AG04450 (cell line): ENCODE measurements at regions of chr14 and their contacts with region 1.

Region 1: DNA sequence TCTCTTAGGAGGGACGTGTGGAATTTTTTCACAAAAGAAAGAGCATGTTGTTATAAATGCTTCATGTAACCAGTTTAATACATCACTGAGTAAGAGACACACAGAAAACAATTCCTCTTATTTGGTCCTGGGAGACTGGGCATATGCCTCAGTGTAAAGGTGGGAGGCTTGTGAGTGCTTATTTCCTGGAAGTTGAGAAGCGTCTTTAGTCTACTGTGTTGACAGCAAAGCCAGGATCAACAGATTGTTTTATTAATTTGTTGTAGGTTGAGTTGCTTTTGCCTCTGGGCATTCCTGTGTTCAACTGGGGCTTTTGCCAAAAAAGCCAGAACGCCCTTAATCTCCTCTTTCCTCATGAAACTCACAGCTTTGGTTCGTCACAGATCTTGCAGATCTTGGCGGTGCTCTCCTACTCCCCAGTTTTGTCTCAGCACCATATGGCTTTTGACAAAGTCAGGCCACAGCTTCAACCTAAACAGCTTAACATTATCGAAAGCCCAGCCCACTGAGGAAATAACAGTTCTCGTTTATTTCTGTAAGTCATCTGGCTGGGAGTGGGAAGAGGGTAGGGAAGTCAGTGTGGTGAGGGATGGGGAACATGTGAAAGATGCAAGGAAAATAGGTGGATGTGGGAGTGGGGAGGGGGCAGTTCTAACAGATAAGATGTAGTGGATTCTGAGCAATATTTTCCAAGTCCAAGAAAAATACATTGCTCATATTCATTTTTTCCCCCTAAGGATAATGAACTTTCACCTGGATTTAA is 227.2 kb downstream of the DACT1 start:
- DNase-seq: peak; percentile 60
- H3K4me3 ChIP-seq: no peak overlapping the region
- H3K27ac ChIP-seq: peak overlapping the region; percentile 74
- H3K27me3 ChIP-seq: no peaks in the 10 kb centered on the region
- CTCF ChIP-seq: no peak

Region 2: GRCh38 chr14:58850011-58850410 is 14.9 kb before region 1 on chr14:
- CTCF ChIA-PET with region 1: no interaction called
- POLR2A ChIA-PET with region 1: no interaction called
- DNase-seq: no peak
- H3K4me3 ChIP-seq: no peak overlapping the region
- H3K27ac ChIP-seq: no peak overlapping the region
- H3K27me3 ChIP-seq: no peaks in the 10 kb centered on the region
- CTCF ChIP-seq: no peak

Region 3: DNA sequence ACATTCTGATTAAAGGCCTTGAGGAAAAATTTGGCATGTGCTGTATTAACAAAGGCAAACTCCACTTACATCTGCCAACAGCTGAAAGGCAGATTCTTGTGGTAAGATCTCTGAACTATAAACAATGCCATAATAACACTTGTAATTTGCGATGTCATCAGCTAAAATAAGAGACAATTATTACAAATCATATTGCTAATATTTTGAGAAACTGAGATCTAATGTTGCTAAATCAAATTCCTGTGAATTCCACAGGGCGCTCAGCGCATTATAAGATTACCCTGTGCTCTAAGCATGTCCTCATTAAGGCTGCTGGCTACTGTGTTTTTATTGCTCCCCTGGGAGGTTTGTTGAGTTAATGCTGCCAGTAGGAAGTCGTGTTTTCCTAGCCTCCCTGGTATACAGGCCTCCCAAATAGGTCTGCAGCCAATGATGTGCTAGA is 17.7 kb after region 1 on chr14:
- CTCF ChIA-PET with region 1: no interaction called
- POLR2A ChIA-PET with region 1: interaction called, 15 read pairs
- DNase-seq: no peak
- H3K4me3 ChIP-seq: no peak overlapping the region
- H3K27ac ChIP-seq: no peak overlapping the region
- H3K27me3 ChIP-seq: no peaks in the 10 kb centered on the region
- CTCF ChIP-seq: no peak